ENCODE measurements at regions of chr12 and their contacts with region 1.

Region 1: DNA sequence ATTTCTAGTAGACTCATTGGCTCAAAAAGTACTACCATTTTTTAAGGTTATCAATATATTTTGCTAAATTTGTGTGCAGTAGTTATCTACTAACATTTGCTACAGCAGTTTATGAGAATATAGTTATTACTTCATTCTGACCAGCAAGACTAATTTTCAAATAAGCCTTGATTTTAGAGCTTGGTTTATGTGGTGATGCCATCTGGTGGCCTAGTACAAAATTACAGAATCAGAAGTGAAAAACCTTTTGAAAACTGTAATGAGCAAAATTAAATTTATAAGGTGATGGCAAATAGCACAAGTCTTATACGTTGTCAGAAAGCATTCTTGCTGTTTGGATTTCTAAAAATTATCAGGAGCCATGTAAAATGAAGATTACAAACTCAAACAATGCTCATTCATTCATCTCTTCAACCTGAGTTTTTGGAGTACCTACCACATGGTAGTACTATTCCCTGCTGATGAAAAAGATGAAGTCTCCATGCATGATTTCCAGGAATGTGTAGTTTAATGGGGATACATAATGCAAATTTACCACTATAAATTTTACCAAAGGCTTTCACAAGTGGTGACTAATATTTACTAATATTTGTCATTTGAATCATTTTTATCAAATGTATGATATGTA is 51.0 kb downstream of the MAGOHB start:
- DNase-seq: peak; percentile 35
- ATAC-seq: no peak
- H3K4me3 Mint-ChIP-seq: peak overlapping the region; percentile 10
- H3K27ac Mint-ChIP-seq: peak overlapping the region; percentile 58
- H3K4me1 Mint-ChIP-seq: peaks cover 70% of the 10 kb centered on the region
- H3K27me3 Mint-ChIP-seq: no peaks in the 10 kb centered on the region
- CTCF ChIP-seq: peak; percentile 87

Region 2: DNA sequence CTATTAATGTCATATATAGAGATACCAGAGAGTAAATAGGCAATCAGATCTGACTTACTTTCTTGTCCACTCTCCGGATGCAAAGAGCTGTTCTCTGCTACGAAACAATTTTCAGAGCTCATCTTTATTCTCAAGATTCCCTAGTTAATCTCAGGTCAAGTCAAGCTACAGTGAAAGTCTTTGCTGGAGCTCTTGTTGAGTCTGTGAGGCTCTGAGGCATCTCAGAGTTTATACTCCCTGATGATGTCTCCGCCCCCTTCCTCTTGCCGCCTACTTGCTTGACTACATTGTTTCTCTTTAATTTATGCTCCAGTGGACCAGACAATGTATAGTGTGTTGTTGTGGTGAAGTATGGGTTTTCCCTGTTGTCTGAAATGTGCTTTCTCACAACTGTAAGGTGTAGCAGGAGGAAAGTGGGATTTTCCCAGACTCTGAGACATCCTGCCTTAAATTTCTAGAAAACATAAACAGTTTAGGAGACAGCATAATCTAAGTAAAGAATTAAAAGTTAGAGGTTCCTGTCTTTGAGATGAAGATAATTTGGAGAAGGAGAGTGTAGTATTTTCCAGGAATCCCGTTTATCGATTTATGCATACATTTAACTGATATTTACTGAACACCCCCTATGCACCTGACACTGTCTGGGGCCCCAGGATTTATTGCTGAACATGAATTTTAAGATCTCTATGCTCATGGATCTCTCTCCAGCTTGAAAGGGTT is 801.6 kb before region 1 on chr12 and contains the start of gene CD69:
- CTCF ChIA-PET with region 1: no interaction called
- POLR2A ChIA-PET with region 1: interaction called, 27 read pairs
- intact Hi-C with region 1: no loop called
- DNase-seq: peak; percentile 89
- ATAC-seq: peak; percentile 57
- H3K4me3 Mint-ChIP-seq: peak within 1 kb of the TSS; percentile 97
- H3K27ac Mint-ChIP-seq: peak within 1 kb of the TSS; percentile 99
- H3K4me1 Mint-ChIP-seq: peaks cover 34% of the 10 kb centered on the region
- H3K27me3 Mint-ChIP-seq: no peaks in the 10 kb centered on the region
- CTCF ChIP-seq: no peak
- total RNA-seq, gene CD69: 166 to 174 TPM

Region 3: GRCh38 chr12:10364815-10365622 is 197.4 kb before region 1 on chr12:
- CTCF ChIA-PET with region 1: interaction called, 37 read pairs
- POLR2A ChIA-PET with region 1: interaction called, 10 read pairs
- intact Hi-C with region 1: loop called (anchors 10 kb)
- DNase-seq: peak; percentile 83
- ATAC-seq: peak; percentile 62
- H3K4me3 Mint-ChIP-seq: no peak overlapping the region
- H3K27ac Mint-ChIP-seq: no peak overlapping the region
- H3K4me1 Mint-ChIP-seq: peaks cover 41% of the 10 kb centered on the region
- H3K27me3 Mint-ChIP-seq: no peaks in the 10 kb centered on the region
- CTCF ChIP-seq: no peak

Region 4: DNA sequence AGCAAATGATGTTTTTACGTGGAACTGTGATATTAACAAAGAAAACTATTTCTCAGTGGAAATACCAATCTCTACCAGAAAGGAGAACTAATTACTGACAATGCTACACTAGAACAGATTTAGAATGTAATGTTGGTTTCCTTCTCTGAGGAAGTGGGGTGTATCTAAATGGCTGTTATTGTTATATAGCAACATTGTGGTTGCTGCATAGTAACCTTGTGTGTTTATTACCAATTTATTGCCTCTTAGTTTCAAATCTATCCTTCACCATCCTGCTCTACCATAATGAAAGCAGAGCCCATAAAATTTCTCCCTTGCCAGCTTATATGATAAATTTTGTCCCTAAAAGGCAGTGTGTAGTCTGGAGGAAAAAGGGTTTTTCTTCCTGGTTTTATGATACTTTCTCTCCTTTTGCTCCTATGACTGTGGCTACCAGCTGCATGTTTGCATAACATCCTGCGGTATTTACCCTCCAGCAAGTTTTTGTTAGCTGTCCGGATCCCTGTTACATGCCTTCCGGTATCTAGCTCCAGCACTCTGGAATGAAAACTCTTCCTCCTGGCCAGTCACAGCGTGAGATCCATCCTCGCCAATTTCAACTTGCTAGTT is 166.9 kb before region 1 on chr12:
- CTCF ChIA-PET with region 1: interaction called, 12 read pairs
- POLR2A ChIA-PET with region 1: interaction called, 26 read pairs
- intact Hi-C with region 1: loop called (anchors 5 kb)
- DNase-seq: no peak
- ATAC-seq: peak; percentile 45
- H3K4me3 Mint-ChIP-seq: peak overlapping the region; percentile 63
- H3K27ac Mint-ChIP-seq: peak overlapping the region; percentile 97
- H3K4me1 Mint-ChIP-seq: peaks cover 64% of the 10 kb centered on the region
- H3K27me3 Mint-ChIP-seq: no peaks in the 10 kb centered on the region
- CTCF ChIP-seq: no peak

Region 5: DNA sequence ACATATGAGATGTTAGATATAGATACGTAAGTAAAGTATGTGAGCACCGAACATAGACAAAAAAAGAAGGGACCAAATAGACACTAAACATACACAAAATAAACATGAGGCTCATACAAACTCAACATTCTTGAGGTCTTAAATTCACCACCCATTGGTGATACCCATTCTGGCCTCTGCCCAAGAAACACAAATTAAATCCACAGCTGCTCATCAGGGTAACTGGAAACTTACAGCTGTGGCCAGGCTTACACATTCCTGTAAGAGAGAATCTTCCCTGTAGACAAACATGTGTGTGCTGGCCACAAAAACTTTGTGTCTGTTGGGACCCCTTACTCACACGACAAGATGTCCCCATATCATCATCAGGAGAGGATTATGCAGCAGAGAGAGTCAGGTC is 28.5 kb after region 1 on chr12:
- CTCF ChIA-PET with region 1: no interaction called
- POLR2A ChIA-PET with region 1: no interaction called
- intact Hi-C with region 1: no loop called
- DNase-seq: no peak
- ATAC-seq: no peak
- H3K4me3 Mint-ChIP-seq: no peak overlapping the region
- H3K27ac Mint-ChIP-seq: no peak overlapping the region
- H3K4me1 Mint-ChIP-seq: no peaks in the 10 kb centered on the region
- H3K27me3 Mint-ChIP-seq: no peaks in the 10 kb centered on the region
- CTCF ChIP-seq: no peak

Region 6: DNA sequence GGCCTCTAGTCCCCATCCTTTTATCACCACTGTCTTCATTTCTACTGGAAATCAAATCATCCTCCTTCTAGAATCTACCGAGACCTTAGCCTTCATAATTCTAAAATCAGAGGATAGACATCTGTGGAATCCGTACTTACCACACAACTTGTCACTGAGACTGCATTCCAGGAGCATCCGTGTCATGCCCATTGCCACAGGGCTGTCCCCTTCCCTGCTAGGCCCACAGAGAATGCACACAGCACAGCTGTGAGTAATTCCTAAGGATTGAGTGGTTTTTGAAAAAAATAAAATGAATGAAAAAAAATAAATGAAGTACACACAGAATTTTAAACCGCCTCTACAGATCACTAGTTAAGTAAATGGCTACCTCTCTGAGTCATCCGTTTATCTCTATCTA is 72.0 kb after region 1 on chr12:
- CTCF ChIA-PET with region 1: no interaction called
- POLR2A ChIA-PET with region 1: no interaction called
- intact Hi-C with region 1: no loop called
- DNase-seq: no peak
- ATAC-seq: no peak
- H3K4me3 Mint-ChIP-seq: no peak overlapping the region
- H3K27ac Mint-ChIP-seq: no peak overlapping the region
- H3K4me1 Mint-ChIP-seq: no peaks in the 10 kb centered on the region
- H3K27me3 Mint-ChIP-seq: no peaks in the 10 kb centered on the region
- CTCF ChIP-seq: no peak

Region 7: DNA sequence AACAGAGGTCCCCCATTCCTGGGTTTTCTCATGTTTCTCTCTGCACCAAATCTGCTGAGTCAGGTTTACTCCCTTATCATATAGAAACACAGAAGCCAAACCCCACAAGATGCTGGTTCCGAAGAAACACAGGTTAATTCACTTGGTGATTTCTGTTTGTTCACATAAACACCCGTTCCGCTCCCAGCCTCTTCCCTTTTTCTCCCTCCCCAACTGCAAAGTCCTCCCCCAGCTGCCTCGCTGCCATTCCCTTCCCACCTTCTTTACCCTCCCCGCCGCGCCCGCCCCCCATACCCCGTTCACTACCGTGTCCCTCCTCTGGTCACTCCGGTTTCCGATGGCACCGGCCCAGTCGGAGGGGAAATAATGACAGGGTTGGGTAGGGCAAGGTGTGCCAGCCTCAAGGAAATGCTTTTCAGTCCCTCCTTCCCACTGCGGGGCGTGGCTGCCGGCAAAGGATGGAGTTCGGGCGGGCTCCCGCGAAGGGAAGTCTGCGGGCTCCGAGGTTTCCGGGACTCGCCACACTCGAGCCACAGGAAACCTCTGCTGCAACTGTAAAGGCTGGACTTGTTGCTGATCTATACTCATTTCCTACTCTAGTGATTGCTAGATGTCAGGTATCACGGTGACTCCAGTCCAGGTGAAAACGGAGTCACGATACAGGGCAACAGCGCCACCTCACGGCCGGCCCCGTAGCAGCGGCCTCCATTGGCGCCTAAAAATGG is 111.4 kb after region 1 on chr12 and contains the start of gene STYK1:
- CTCF ChIA-PET with region 1: no interaction called
- POLR2A ChIA-PET with region 1: no interaction called
- intact Hi-C with region 1: loop called (anchors 10 kb)
- DNase-seq: peak; percentile 84
- ATAC-seq: peak; percentile 81
- H3K4me3 Mint-ChIP-seq: peak within 1 kb of the TSS; percentile 71
- H3K27ac Mint-ChIP-seq: peak within 1 kb of the TSS; percentile 76
- H3K4me1 Mint-ChIP-seq: peaks cover 39% of the 10 kb centered on the region
- H3K27me3 Mint-ChIP-seq: peaks cover 20% of the 10 kb centered on the region
- CTCF ChIP-seq: peak; percentile 99
- total RNA-seq, gene STYK1: 0.70 to 1.1 TPM

Measured in activated CD8-positive, alpha-beta T cell treated with anti-CD3 and anti-CD28 coated beads for 36 hours (primary cell).